ENCODE measurements at regions of chr13 and their contacts with region 1.

Region 1: GRCh38 chr13:56378566-56378965 is 762.2 kb upstream of the PRR20A start:
- DNase-seq: no peak
- H3K4me3 ChIP-seq: no peak overlapping the region
- H3K27ac ChIP-seq: no peak overlapping the region
- H3K4me1 ChIP-seq: no peaks in the 10 kb centered on the region
- H3K27me3 ChIP-seq: no peaks in the 10 kb centered on the region
- CTCF ChIP-seq: no peak

Region 2: DNA sequence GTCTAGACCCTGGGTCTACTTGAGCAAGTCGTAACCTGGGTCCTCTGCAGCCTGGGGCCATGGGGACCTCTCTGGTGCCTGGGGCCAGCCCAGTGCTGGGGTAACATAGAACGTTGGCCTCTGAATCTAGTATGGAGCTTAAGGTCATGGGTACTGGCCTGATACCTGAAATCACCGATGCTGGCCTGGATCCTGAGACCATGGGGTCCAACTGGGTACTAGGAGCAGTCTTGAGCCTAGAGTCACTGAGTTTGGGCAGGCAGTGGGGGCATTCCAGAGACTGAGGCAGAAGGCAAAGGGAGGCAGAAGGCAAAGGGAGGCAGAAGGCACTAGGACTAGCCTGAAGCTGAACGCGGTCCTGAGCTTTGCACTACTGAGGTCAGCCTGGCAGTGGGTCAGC is 359.0 kb before region 1 on chr13:
- CTCF ChIA-PET with region 1: no interaction called
- POLR2A ChIA-PET with region 1: interaction called, 13 read pairs
- intact Hi-C with region 1: no loop called
- DNase-seq: no peak
- H3K4me3 ChIP-seq: no peak overlapping the region
- H3K27ac ChIP-seq: no peak overlapping the region
- H3K4me1 ChIP-seq: no peaks in the 10 kb centered on the region
- H3K27me3 ChIP-seq: no peaks in the 10 kb centered on the region
- CTCF ChIP-seq: no peak

Region 3: GRCh38 chr13:56144060-56144459 is 234.5 kb before region 1 on chr13:
- CTCF ChIA-PET with region 1: no interaction called
- POLR2A ChIA-PET with region 1: no interaction called
- intact Hi-C with region 1: no loop called
- DNase-seq: no peak
- H3K4me3 ChIP-seq: no peak overlapping the region
- H3K27ac ChIP-seq: no peak overlapping the region
- H3K4me1 ChIP-seq: no peaks in the 10 kb centered on the region
- H3K27me3 ChIP-seq: no peaks in the 10 kb centered on the region
- CTCF ChIP-seq: no peak

Region 4: DNA sequence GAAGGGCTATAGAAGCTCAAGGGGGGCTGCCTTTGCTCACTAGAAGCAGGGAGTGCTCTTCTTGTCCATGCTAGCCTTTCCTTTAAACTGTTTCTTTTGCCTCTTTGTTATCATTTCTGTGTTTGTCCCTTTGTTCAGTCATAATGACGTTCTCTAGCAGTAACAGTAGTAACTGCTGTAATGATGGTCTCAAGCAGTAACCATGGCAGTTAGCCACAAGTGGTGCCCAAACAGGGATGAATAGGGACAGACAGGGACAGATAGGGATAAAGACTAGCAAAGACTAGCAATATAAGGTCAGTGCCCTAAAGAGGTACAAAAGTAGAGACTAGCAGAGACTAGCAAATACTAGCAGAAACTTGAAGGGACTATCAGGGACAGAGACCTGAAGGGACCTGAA is 106.9 kb before region 1 on chr13:
- CTCF ChIA-PET with region 1: no interaction called
- POLR2A ChIA-PET with region 1: no interaction called
- intact Hi-C with region 1: no loop called
- DNase-seq: no peak
- H3K4me3 ChIP-seq: no peak overlapping the region
- H3K27ac ChIP-seq: no peak overlapping the region
- H3K4me1 ChIP-seq: no peaks in the 10 kb centered on the region
- H3K27me3 ChIP-seq: no peaks in the 10 kb centered on the region
- CTCF ChIP-seq: no peak

Region 5: DNA sequence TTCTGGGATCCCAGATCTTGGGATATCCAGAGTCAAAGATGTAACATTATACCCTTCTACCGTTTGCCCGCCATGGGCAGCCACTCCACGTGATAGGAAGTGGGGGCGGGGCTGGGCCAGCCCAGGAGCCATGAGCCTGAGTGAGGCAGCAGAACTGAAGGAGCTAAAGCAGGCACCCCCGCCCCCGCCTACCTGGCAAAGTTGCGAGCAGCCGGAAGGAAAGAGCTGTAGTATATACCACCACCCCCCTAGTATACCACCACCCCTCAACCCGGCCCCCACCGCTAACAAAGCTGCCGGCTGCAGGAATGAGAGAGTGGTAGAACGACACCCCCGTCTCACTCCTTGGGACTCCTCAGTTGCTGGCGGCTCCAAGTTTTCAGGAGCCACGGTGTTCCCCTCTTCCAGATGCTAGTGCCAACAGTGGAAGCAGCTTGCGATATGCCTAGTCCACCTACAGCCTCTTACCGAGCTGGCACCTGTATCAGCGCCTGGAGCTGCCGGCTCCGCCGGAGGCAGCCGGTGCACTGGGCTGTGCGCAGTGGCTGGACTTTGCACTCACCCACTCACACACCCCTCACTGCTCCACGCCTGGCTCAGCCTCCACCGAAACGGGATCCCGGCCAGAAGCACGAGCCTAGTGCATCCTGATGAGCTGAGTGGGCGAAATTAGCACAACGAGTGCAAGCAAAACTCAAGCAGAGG is 531.5 kb after region 1 on chr13:
- CTCF ChIA-PET with region 1: no interaction called
- POLR2A ChIA-PET with region 1: no interaction called
- intact Hi-C with region 1: no loop called
- DNase-seq: no peak
- H3K4me3 ChIP-seq: no peak overlapping the region
- H3K27ac ChIP-seq: no peak overlapping the region
- H3K4me1 ChIP-seq: no peaks in the 10 kb centered on the region
- H3K27me3 ChIP-seq: no peaks in the 10 kb centered on the region
- CTCF ChIP-seq: no peak

Region 6: GRCh38 chr13:57546942-57547341 is 1168.4 kb after region 1 on chr13:
- CTCF ChIA-PET with region 1: no interaction called
- POLR2A ChIA-PET with region 1: no interaction called
- intact Hi-C with region 1: no loop called
- DNase-seq: no peak
- H3K4me3 ChIP-seq: no peak overlapping the region
- H3K27ac ChIP-seq: no peak overlapping the region
- H3K4me1 ChIP-seq: no peaks in the 10 kb centered on the region
- H3K27me3 ChIP-seq: no peaks in the 10 kb centered on the region
- CTCF ChIP-seq: no peak

Measured in A673 (cell line).